Activated CD4-positive, alpha-beta memory T cell treated with anti-CD3 and anti-CD28 coated beads, Interleukin-2, amount 10 ng/mL, durations not matched to agents 7 days and 5 days (primary cell): ENCODE measurements at regions of chr11 and their contacts with region 1.

Region 1: DNA sequence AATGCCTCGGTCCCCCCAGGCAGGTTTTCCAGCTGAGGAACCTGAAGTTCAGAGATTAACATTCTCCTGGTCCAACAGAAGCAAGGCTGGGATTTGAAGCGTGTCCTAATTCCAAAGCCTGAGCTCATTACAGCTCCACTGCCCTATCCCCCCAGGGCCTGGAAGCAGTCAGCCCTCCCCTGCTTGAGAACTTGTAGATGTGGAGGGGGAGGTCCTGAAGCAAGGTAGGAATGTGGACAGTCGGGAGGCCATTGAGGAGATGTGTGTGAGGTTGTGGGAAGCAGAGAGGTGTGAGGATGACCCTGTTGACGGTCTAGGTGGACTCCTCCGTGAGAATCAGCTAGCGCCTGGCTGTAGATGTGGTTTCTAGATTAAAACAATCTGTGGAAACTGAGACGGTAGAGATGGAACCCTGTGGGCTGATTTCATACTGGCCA is 8.1 kb downstream of the GRAMD1B start:
- DNase-seq: no peak
- H3K4me3 Mint-ChIP-seq: peak overlapping the region; percentile 45
- H3K27ac Mint-ChIP-seq: peak overlapping the region; percentile 86
- H3K4me1 Mint-ChIP-seq: peaks cover 93% of the 10 kb centered on the region
- H3K27me3 Mint-ChIP-seq: no peaks in the 10 kb centered on the region

Region 2: GRCh38 chr11:123316003-123316402 is 122.2 kb before region 1 on chr11:
- CTCF ChIA-PET with region 1: no interaction called
- POLR2A ChIA-PET with region 1: no interaction called
- DNase-seq: no peak
- H3K4me3 Mint-ChIP-seq: no peak overlapping the region
- H3K27ac Mint-ChIP-seq: no peak overlapping the region
- H3K4me1 Mint-ChIP-seq: peaks cover 2% of the 10 kb centered on the region
- H3K27me3 Mint-ChIP-seq: peaks cover 21% of the 10 kb centered on the region

Region 3: DNA sequence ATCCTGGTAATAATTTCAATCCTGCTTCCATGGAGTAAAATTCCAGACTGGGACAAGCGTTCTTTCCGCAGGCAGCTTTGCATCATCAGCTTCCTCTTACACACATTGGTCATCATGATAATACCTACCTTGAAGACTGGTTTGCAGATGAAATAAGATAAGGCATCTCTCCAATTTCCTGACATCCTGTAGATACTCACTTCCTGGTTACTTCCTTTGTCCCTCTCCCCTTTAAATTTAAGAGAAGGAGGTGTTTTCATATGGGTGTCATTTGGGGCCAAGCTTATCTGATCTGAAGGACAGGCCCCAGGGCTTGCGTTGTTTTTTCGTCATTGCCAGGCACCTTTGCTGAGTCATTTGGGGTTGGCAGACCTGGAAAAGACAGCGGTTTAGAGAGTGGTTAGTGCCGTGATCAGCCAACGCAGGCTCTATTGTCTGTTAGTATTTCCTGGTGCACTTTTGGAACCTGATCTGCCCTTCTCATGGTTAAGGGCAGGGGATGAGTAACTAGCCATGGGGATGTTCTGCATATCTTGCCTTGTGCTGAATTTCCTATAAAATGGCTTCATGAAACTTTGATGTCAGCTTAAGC is 15.9 kb after region 1 on chr11:
- CTCF ChIA-PET with region 1: interaction called, 67 read pairs
- POLR2A ChIA-PET with region 1: interaction called, 147 read pairs
- DNase-seq: peak; percentile 88
- H3K4me3 Mint-ChIP-seq: peak overlapping the region; percentile 59
- H3K27ac Mint-ChIP-seq: peak overlapping the region; percentile 87
- H3K4me1 Mint-ChIP-seq: peaks cover 94% of the 10 kb centered on the region
- H3K27me3 Mint-ChIP-seq: no peaks in the 10 kb centered on the region